Activated naive CD4-positive, alpha-beta T cell treated with anti-CD3 and anti-CD28 coated beads for 36 hours (primary cell): ENCODE measurements at regions of chr2 and their contacts with region 1.

Region 1: GRCh38 chr2:171703574-171704347 is 16.5 kb downstream of the DYNC1I2 start:
- DNase-seq: peak; percentile 13
- H3K4me3 Mint-ChIP-seq: no peak overlapping the region
- H3K27ac Mint-ChIP-seq: peak overlapping the region; percentile 26
- H3K4me1 Mint-ChIP-seq: peaks cover 4% of the 10 kb centered on the region
- H3K27me3 Mint-ChIP-seq: no peaks in the 10 kb centered on the region

Region 2: GRCh38 chr2:170815746-170816503 is 887.8 kb before region 1 on chr2:
- CTCF ChIA-PET with region 1: no interaction called
- intact Hi-C with region 1: no loop called
- DNase-seq: peak; percentile 77
- H3K4me3 Mint-ChIP-seq: peak overlapping the region; percentile 68
- H3K27ac Mint-ChIP-seq: no peak overlapping the region
- H3K4me1 Mint-ChIP-seq: peaks cover 43% of the 10 kb centered on the region
- H3K27me3 Mint-ChIP-seq: peaks cover 72% of the 10 kb centered on the region

Region 3: DNA sequence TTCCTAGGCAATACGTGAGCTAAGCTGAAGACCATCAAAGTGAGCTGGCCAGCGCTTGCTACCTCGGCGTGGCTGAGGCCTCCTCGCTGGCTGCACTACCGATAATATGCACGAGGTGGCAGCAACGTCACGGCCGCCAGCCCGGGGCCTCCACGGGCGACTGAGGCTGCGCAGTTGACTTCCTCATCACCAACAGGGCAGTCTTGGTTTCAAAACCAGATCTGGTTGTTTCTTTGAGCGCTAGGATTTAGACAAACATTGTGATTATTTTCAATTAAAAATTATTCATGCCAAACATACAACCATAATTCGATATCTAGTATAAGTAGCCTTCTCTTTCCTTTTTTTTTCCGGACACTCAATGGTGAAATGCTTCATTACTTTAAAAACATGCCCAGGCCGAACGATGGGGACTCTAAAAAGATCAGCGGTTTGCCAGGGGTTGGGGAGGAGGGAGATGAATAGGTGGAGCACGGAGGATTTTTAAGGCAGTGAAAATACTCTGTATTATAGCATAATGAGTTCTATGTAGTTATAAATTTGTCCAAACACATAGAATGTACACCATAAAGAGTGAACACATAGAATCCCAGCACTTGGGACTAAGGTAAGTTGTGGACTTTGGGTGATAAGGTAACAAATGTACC is 129.5 kb before region 1 on chr2:
- CTCF ChIA-PET with region 1: interaction called, 5 read pairs
- intact Hi-C with region 1: loop called (anchors 1 kb)
- DNase-seq: peak; percentile 86
- H3K4me3 Mint-ChIP-seq: no peak overlapping the region
- H3K27ac Mint-ChIP-seq: peak overlapping the region; percentile 53
- H3K4me1 Mint-ChIP-seq: peaks cover 5% of the 10 kb centered on the region
- H3K27me3 Mint-ChIP-seq: no peaks in the 10 kb centered on the region

Region 4: GRCh38 chr2:171687287-171688128 is 16.3 kb before region 1 on chr2 and contains the start of gene DYNC1I2:
- CTCF ChIA-PET with region 1: interaction called, 14 read pairs
- intact Hi-C with region 1: no loop called
- DNase-seq: peak; percentile 88
- H3K4me3 Mint-ChIP-seq: peak within 1 kb of the TSS; percentile 84
- H3K27ac Mint-ChIP-seq: peak within 1 kb of the TSS; percentile 85
- H3K4me1 Mint-ChIP-seq: peaks cover 15% of the 10 kb centered on the region
- H3K27me3 Mint-ChIP-seq: no peaks in the 10 kb centered on the region
- total RNA-seq, gene DYNC1I2: 37.8 to 38.9 TPM

Region 5: DNA sequence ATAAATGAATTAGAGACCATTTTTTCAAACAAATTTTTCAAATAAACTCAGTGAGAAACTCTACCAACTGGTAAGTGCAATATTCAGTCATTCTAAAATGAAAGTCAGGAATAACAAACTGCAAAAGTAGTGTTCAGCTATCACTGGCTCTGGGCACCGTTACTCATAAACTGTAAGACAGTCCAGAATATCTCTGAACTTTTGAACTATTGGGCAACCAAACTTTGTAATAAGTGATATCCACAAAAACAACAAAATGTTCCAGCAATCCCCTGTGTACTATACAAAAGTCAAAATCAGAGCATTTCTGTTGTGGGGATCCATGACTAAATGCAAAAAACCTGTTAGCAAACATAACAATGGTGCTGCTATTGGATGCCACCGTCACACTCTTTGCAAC is 134.0 kb after region 1 on chr2:
- CTCF ChIA-PET with region 1: no interaction called
- intact Hi-C with region 1: no loop called
- DNase-seq: no peak
- H3K4me3 Mint-ChIP-seq: no peak overlapping the region
- H3K27ac Mint-ChIP-seq: no peak overlapping the region
- H3K4me1 Mint-ChIP-seq: no peaks in the 10 kb centered on the region
- H3K27me3 Mint-ChIP-seq: no peaks in the 10 kb centered on the region

Region 6: DNA sequence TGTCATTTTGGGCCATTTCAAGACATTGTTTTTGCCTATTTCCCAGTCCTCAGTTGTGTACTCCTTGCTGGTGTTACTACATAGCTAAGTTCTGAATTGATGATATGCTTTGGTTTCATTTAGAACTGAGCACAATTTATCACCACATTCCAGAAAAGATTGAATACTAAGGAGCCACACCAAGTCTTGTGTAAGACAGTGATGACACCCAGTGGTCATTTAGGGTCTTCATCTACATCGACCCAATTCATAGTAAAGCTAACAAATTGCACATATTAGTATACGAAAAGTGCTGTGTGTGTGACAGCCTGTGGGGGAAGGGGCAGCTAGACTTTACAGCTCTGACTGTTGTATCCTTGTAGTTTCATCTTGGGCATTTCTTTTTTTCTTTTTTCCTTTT is 409.9 kb after region 1 on chr2:
- CTCF ChIA-PET with region 1: interaction called, 18 read pairs
- intact Hi-C with region 1: no loop called
- DNase-seq: no peak
- H3K4me3 Mint-ChIP-seq: no peak overlapping the region
- H3K27ac Mint-ChIP-seq: no peak overlapping the region
- H3K4me1 Mint-ChIP-seq: peaks cover 9% of the 10 kb centered on the region
- H3K27me3 Mint-ChIP-seq: peaks cover 20% of the 10 kb centered on the region

Region 7: DNA sequence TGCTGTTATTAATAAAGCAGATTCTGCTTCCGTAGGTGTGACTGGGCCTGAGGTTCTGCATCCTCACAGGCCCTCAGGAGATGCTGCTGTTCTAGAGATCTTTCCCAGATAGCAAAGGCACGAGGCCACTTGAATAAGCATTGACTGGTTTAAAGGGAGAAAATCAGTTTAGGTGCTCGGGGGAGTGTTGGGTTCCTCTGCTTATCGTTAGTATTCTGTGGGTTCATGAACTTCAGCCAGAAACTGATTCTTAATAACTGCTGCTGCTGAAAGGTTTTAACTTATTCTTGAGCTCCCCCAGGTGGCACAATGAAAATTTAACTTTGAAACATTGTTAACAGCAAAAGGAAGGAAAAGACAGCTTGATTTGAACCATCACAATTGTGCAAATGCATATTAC is 780.5 kb after region 1 on chr2:
- CTCF ChIA-PET with region 1: no interaction called
- intact Hi-C with region 1: loop called (anchors 5 kb)
- DNase-seq: peak; percentile 37
- H3K4me3 Mint-ChIP-seq: no peak overlapping the region
- H3K27ac Mint-ChIP-seq: no peak overlapping the region
- H3K4me1 Mint-ChIP-seq: peaks cover 52% of the 10 kb centered on the region
- H3K27me3 Mint-ChIP-seq: no peaks in the 10 kb centered on the region